MCF 10A (cell line): ENCODE measurements at regions of chr3 and their contacts with region 1.

Region 1: DNA sequence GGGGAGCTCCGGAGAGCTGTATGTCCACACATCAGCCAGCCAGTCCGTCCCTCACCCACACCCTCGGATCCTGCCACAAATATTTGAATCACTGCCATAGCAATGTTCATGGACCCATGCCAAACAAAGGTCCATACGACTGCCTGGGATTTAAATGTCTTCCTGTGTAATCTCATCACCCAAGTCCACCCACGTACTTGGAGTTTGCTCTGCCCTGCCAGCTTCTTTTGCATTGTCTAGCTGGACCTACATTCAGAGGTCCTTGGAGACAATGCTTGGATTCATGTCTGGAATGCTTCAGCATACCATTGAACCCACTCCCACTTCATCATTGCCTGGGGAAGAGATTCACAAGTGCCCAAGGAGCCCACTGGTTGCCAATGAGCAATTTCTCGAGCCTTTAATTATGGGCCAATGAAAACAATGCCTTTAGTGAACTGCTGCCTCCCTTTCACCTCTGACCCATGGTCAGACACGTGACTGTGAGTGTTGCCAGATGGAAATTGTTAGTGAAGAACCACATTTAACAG is 90.4 kb upstream of the PHLDB2 start:
- DNase-seq: peak; percentile 96
- H3K4me3 Mint-ChIP-seq: no peak overlapping the region
- H3K27ac Mint-ChIP-seq: peak overlapping the region; percentile 82
- H3K4me1 Mint-ChIP-seq: peaks cover 38% of the 10 kb centered on the region
- H3K27me3 Mint-ChIP-seq: no peaks in the 10 kb centered on the region
- CTCF ChIP-seq: no peak

Region 2: DNA sequence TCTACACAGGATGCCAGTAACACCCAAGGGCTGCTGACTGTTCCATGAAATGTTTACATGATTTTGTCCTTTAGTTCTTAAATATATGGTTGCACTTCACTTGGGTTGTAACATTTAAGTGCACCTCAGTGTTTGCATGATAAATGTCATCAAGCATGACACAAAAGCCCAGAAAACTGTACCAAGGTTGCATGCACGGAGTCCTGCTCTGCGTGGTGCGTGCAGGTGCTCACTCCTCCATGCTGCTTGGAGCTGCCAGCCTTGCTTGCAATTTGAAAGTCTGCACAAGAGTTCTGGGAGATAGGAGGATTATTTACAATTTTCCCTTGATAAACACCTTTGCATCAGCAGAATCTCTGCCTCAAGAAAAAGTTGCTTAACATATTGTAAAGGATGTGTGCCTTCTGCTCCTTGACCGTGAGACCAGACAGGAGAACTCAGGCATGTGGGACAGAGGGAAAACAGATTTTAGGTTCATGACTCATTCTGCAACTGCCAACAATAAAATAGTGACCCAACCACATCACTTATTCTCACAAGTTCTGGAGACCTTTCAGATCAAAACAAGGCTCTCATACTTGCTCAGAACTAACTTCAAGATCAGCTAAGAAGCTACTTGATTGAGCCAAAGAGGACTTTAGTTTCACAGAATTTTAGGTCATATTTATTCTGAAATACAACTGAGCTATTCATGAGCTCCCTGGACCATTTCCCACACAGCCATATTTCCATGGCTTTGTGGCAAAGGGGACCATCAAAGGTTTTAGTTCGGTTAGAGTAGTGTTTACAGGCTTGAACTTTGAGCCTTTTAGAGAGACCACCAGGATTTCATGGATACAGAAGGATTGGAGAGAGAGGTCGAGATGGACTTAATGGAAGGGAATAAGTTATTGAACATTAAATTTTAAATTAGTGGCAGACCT is 45.1 kb before region 1 on chr3:
- CTCF ChIA-PET with region 1: interaction called, 20 read pairs
- POLR2A ChIA-PET with region 1: no interaction called
- intact Hi-C with region 1: loop called (anchors 5 kb)
- DNase-seq: peak; percentile 76
- H3K4me3 Mint-ChIP-seq: no peak overlapping the region
- H3K27ac Mint-ChIP-seq: peak overlapping the region; percentile 86
- H3K4me1 Mint-ChIP-seq: peaks cover 19% of the 10 kb centered on the region
- H3K27me3 Mint-ChIP-seq: no peaks in the 10 kb centered on the region
- CTCF ChIP-seq: no peak

Region 3: GRCh38 chr3:111785034-111785433 is 16.4 kb after region 1 on chr3:
- CTCF ChIA-PET with region 1: interaction called, 3 read pairs
- POLR2A ChIA-PET with region 1: interaction called, 11 read pairs
- intact Hi-C with region 1: no loop called
- DNase-seq: no peak
- H3K4me3 Mint-ChIP-seq: no peak overlapping the region
- H3K27ac Mint-ChIP-seq: no peak overlapping the region
- H3K4me1 Mint-ChIP-seq: peaks cover 5% of the 10 kb centered on the region
- H3K27me3 Mint-ChIP-seq: no peaks in the 10 kb centered on the region
- CTCF ChIP-seq: no peak

Region 4: DNA sequence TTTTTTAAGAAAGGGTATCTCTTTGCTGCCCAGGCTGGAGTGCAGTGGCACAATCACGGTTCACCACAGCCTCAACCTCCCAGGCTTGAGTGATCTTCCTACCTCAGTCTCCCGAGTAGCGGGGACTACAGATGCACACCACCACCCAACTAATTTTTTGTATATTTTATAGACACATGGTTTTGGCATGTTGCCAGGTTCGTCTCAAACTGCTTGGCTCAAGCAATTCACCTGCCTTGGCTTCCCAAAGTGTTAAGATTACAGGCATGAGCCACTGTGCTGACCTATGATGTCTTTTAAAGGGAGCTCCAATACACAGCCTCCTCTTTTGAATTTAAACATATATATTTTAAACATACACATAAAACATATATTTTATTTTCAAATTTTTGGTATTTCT is 464.4 kb after region 1 on chr3:
- CTCF ChIA-PET with region 1: no interaction called
- POLR2A ChIA-PET with region 1: no interaction called
- intact Hi-C with region 1: no loop called
- DNase-seq: no peak
- H3K4me3 Mint-ChIP-seq: no peak overlapping the region
- H3K27ac Mint-ChIP-seq: no peak overlapping the region
- H3K4me1 Mint-ChIP-seq: no peaks in the 10 kb centered on the region
- H3K27me3 Mint-ChIP-seq: no peaks in the 10 kb centered on the region
- CTCF ChIP-seq: no peak